IMR-90 (cell line): ENCODE measurements at regions of chr11 and their contacts with region 1.

Region 1: DNA sequence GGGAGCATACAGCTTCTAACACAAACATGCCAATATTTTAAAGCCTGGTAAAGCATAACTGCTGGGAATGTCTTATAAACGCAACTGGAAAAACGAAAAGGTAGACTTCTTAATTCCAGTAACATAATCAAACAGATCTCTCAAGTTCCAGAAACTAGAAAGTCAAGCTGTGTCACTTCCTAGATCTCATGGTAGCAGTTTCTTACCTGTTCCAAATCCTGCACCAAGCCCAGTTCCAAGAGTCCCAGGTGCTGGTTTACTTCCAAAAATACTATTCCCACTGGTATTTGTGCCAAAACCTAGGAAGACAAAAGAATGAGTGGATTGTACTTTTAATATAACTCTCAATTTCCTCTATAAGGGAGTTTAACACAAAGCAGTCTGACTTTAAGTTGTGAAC is 44.2 kb downstream of the NUP98 start:
- DNase-seq: no peak
- ATAC-seq: no peak
- H3K4me3 ChIP-seq: no peak overlapping the region
- H3K27ac ChIP-seq: no peak overlapping the region
- H3K4me1 ChIP-seq: peaks cover 2% of the 10 kb centered on the region; the same call in 1 of the 2 replicates
- H3K27me3 ChIP-seq: no peaks in the 10 kb centered on the region
- CTCF ChIP-seq: no peak
- POLR2A ChIP-seq: no peak
- RAD21 ChIP-seq: no peak

Region 2: DNA sequence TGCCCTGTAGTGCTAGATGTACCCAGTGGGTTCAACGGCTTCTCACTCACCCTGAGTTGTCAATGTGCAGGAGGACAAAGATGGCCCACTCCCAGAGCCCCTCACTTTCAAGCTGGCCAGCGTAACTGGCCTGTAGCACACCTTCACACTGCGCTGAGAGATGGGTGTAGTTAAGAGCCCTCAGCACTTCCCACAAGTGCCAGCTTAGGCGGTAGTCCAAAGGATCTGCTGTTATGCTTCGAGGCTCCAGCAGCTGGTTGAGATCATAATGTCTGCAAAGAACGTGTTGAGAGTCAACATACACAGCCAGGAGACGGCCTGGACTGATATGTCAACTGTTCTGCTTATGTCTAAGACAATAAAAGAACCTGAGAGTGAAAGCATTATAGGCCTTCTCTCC is 67.2 kb before region 1 on chr11:
- CTCF ChIA-PET with region 1: no interaction called
- POLR2A ChIA-PET with region 1: no interaction called
- dilution Hi-C with region 1: no loop called
- in situ Hi-C with region 1: no loop called
- intact Hi-C with region 1: loop called (anchors 5 kb)
- DNase-seq: no peak
- ATAC-seq: peak; percentile 30; the same call in 1 of the 2 replicates
- H3K4me3 ChIP-seq: no peak overlapping the region
- H3K27ac ChIP-seq: peak overlapping the region; percentile 7; the same call in 1 of the 2 replicates
- H3K4me1 ChIP-seq: peaks cover 3% of the 10 kb centered on the region; the same call in 1 of the 2 replicates
- H3K27me3 ChIP-seq: no peaks in the 10 kb centered on the region
- CTCF ChIP-seq: no peak
- POLR2A ChIP-seq: no peak
- RAD21 ChIP-seq: no peak